ENCODE measurements at regions of chr1 and their contacts with region 1.

Region 1: DNA sequence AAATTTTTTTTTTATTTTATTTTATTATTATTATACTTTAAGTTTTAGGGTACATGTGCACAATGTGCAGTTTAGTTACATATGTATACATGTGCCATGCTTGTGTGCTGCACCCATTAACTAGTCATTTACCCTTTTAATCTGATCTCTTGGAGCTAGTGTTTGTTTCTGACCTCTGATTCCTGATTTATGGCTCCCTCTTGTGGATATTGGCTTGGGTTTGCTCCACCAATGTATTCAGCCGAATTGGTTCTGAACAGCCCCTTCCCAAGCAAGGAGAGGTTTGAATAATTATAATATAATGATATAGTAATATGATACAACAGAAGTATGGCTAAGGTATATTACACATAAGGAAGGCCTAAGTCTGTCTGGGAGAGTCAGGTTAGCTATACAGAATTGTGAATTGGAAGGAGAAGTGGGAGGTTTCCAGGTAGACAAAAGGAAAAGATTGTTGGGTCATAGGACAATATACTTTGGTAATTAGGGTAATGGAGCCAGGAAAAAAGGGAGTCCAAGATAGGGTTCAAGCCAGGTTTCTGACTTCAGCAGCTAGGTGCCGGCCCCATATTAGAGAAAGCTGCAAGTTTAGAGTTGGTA is 53.1 kb upstream of the HMCN1 start:
- DNase-seq: peak in 1 of 3 donors; percentile 57
- ATAC-seq: peak; percentile 73
- H3K4me3 ChIP-seq: no peak overlapping the region
- H3K4me1 ChIP-seq: no peaks in the 10 kb centered on the region
- CTCF ChIP-seq: peak; percentile 27

Region 2: GRCh38 chr1:185317034-185317885 is 363.9 kb before region 1 on chr1 and contains the start of gene IVNS1ABP:
- intact Hi-C with region 1: loop called in 1 of 2 experiments (anchors 10 kb)
- DNase-seq: peak; percentile 97 to 99 (median 98)
- ATAC-seq: peak; percentile 87
- H3K4me3 ChIP-seq: peak within 1 kb of the TSS; percentile 93
- H3K4me1 ChIP-seq: peaks cover 13% of the 10 kb centered on the region
- CTCF ChIP-seq: no peak
- total RNA-seq, gene IVNS1ABP: 111 to 213 (median 138) TPM

Region 3: GRCh38 chr1:185453496-185454192 is 227.5 kb before region 1 on chr1:
- intact Hi-C with region 1: no loop called
- DNase-seq: no peak
- ATAC-seq: no peak
- H3K4me3 ChIP-seq: no peak overlapping the region
- H3K4me1 ChIP-seq: no peaks in the 10 kb centered on the region
- CTCF ChIP-seq: no peak

Region 4: GRCh38 chr1:185720633-185721272 is 39.6 kb after region 1 on chr1:
- intact Hi-C with region 1: no loop called
- DNase-seq: no peak
- ATAC-seq: no peak
- H3K4me3 ChIP-seq: no peak overlapping the region
- H3K4me1 ChIP-seq: no peaks in the 10 kb centered on the region
- CTCF ChIP-seq: no peak

Measured in mucosa of descending colon (tissue), 3 donors.